ENCODE measurements at regions of chr6 and their contacts with region 1.

Region 1: GRCh38 chr6:15621203-15622044 is 41.4 kb downstream of the DTNBP1 start:
- DNase-seq: peak in 1 of 10 donors; percentile 25
- H3K4me3 ChIP-seq: no peak overlapping the region
- H3K27ac ChIP-seq: peak overlapping the region in 31 of 59 donors; percentile 12 to 73 (median 55)
- H3K27me3 ChIP-seq: no peaks in the 10 kb centered on the region
- CTCF ChIP-seq: no peak

Region 2: DNA sequence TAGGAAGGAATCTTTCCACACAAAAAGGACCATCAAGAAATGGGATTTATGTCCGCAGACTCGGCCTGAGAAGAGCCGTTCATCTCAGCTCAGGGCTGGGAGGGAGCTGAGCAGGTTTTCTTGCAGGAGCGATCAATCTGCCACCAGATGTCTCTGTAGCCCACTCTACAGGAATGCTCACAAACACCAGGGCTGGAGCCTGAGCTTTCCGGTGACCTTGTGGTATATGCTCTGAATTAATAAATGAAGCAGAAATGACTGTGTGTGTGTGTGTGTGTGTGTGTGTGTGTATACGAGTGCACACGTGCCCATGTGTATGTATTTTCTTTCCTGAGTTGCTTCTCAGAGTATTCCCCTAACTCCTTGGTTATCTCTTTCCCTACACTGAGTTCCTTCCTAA is 1491.8 kb before region 1 on chr6:
- intact Hi-C with region 1: loop called in 1 of 2 experiments (anchors 5 kb)
- DNase-seq: peak in 9 of 10 donors; percentile 44 to 80 (median 63)
- H3K4me3 ChIP-seq: no peak overlapping the region
- H3K27ac ChIP-seq: peak overlapping the region in 18 of 59 donors; percentile 5 to 67 (median 36)
- H3K27me3 ChIP-seq: no peaks in the 10 kb centered on the region
- CTCF ChIP-seq: peak in 54 of 56 donors; percentile 31 to 80 (median 56)

Region 3: DNA sequence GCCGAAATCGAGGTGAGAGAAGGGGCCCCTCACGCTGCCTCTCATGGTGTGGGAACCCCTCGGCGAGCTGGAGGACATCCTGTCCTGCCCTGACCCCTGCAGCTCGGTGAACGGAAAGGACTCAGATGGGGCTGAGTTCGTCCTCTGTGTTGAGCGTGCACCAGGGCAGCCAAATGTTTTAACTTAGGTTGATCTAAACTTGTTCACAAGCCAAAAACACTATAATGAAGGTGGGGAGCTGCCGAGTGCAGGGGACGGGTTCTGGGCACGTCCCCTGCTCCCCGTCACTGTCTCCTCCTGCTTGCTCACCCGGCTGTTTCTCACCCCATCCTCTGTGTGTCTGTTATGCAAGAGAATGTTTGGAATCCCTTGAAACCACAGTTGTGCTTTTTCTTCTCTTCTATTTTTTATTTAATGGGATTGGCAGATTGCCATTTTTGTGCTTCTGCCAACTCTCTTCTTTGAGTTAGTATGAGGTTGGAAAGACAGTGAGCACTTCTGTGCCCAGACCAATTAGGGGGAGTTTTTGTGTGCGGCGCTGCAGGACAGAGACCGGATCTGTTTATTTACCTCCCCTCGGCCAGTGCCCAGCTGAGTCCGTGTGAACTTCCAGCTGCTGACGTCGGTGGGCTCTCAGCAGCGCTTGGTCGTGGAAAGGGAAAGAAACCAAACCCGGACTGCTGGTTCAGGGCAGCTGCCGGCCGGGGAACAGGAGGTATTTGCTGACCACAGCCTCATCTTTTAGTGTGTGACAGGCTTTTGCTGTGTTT is 116.7 kb before region 1 on chr6:
- intact Hi-C with region 1: loop called (anchors 5 kb)
- DNase-seq: peak; percentile 35 to 80 (median 68)
- H3K4me3 ChIP-seq: peak overlapping the region in 48 of 59 donors; percentile 0 to 49 (median 27)
- H3K27ac ChIP-seq: peak overlapping the region in 57 of 59 donors; percentile 2 to 87 (median 68)
- H3K27me3 ChIP-seq: no peaks in the 10 kb centered on the region
- CTCF ChIP-seq: peak in 20 of 56 donors; percentile 1 to 40 (median 16)

Region 4: GRCh38 chr6:15522427-15522826 is 99.0 kb before region 1 on chr6:
- intact Hi-C with region 1: loop called (anchors 5 kb)
- DNase-seq: peak in 1 of 10 donors; percentile 22
- H3K4me3 ChIP-seq: no peak overlapping the region
- H3K27ac ChIP-seq: peak overlapping the region in 25 of 59 donors; percentile 6 to 74 (median 48)
- H3K27me3 ChIP-seq: no peaks in the 10 kb centered on the region
- CTCF ChIP-seq: no peak

Measured in dorsolateral prefrontal cortex (tissue), 120 donors.